Activated naive CD4-positive, alpha-beta T cell treated with anti-CD3 and anti-CD28 coated beads for 36 hours (primary cell): ENCODE measurements at regions of chr13 and their contacts with region 1.

Region 1: DNA sequence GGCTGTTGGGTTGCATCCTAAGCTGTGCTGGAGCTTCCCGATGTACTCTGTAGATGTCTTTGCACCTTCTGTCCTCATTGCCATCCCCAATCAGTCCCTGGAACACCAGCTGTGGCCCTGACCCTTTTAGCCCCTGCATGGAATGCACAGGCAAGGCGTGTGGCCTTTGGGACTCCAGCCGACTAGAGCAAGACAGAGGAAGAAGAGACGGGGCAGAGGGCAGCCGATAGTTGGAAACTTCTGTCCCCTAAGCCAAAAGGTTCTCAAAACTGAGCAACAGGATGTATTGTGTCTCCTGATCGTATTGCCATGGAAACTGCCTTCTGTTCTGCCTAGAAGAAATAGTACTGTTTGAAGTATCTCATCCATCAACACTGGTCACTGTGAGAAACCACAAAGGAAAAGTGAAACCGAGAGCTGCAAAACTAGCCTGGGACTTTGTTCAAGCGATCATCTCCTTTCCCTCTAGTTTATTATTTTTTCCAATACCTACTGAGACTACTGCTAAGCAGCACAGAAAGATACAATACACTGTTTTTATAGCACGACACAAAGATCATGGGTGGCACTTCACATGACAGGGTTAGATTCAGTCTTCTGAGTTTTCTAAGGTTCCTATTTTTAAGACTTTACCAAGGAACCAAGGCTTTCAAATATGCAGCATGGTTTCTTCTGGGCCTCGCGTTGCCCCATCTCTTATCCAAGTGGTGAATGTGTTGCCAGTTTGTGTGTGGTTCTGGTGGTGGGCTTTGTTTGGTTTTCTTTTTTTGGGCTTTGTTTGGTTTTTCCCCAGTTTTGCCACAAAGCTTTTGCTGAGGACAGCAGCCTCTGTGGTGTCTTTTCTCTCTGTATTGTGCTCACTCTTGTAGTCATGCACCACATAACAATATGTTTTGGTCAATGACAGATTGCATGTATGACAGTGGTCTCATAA is 49.2 kb upstream of the GPR183 start:
- DNase-seq: peak; percentile 70
- H3K4me3 Mint-ChIP-seq: peak overlapping the region; percentile 58
- H3K27ac Mint-ChIP-seq: peak overlapping the region; percentile 93
- H3K4me1 Mint-ChIP-seq: peaks cover 97% of the 10 kb centered on the region
- H3K27me3 Mint-ChIP-seq: no peaks in the 10 kb centered on the region

Region 2: DNA sequence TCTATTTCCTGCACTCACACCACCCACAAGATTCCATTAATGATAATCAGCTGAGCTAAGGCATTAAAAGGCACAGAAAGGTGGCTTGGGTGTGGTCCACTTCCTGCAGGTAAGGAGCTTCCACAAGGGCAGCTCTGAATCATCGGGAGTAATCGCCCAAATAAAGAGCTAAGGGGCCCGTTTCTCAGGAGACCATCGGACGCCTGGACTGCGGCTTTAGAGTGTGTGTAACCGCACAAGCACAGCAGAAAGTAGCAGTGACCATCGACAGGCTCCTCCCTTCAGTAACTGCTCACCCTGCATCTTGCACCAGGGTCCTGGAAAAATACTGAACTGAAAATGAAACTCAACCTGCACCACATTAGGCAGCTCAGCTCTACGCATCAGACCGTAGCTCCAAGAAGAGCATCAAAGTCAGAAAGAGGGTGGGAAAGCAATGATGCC is 785.5 kb before region 1 on chr13:
- CTCF ChIA-PET with region 1: no interaction called
- intact Hi-C with region 1: loop called (anchors 5 kb)
- DNase-seq: peak; percentile 62
- H3K4me3 Mint-ChIP-seq: peak overlapping the region; percentile 76
- H3K27ac Mint-ChIP-seq: peak overlapping the region; percentile 80
- H3K4me1 Mint-ChIP-seq: peaks cover 86% of the 10 kb centered on the region
- H3K27me3 Mint-ChIP-seq: no peaks in the 10 kb centered on the region

Region 3: GRCh38 chr13:99041788-99042187 is 314.6 kb before region 1 on chr13:
- CTCF ChIA-PET with region 1: no interaction called
- intact Hi-C with region 1: no loop called
- DNase-seq: no peak
- H3K4me3 Mint-ChIP-seq: no peak overlapping the region
- H3K27ac Mint-ChIP-seq: no peak overlapping the region
- H3K4me1 Mint-ChIP-seq: peaks cover 80% of the 10 kb centered on the region
- H3K27me3 Mint-ChIP-seq: no peaks in the 10 kb centered on the region

Region 4: GRCh38 chr13:99057310-99057975 is 299.0 kb before region 1 on chr13:
- CTCF ChIA-PET with region 1: no interaction called
- intact Hi-C with region 1: loop called (anchors 5 kb)
- DNase-seq: no peak
- H3K4me3 Mint-ChIP-seq: no peak overlapping the region
- H3K27ac Mint-ChIP-seq: no peak overlapping the region
- H3K4me1 Mint-ChIP-seq: peaks cover 68% of the 10 kb centered on the region
- H3K27me3 Mint-ChIP-seq: no peaks in the 10 kb centered on the region

Region 5: DNA sequence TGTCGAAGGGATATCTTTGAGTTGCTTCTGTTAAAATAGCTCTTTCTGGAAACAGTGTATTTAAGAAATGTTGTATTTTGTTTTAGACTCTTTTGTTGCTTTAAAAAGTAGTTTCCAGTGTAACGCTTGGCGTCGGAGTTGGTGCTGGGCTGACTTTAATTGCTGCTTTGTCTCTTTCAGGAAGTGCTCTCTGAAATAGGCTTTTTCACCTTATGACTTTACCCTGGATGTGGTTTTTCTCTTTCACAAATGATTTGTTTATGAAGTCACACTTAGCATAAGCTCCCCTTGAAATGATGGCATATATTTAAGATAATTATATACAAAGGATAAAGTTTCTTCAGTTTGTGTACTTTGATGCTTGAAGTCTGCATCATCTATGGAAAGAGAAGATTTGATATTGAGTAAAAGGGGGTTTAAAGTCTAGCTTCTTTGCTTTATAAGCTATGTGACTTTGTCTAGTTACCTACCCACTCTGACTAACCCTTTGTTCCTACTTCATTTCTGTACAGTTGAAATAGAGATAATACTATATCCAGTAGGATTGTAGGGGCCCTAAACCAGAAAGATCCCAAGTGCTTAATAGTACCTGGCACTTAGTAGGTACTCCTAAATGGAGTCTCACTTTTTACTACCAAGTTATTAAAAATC is 98.1 kb before region 1 on chr13 and contains the start of gene GPR18:
- CTCF ChIA-PET with region 1: no interaction called
- intact Hi-C with region 1: loop called (anchors 1 kb)
- DNase-seq: peak; percentile 61
- H3K4me3 Mint-ChIP-seq: peak within 1 kb of the TSS; percentile 81
- H3K27ac Mint-ChIP-seq: peak within 1 kb of the TSS; percentile 91
- H3K4me1 Mint-ChIP-seq: peaks cover 72% of the 10 kb centered on the region
- H3K27me3 Mint-ChIP-seq: no peaks in the 10 kb centered on the region
- total RNA-seq, gene GPR18: 2.4 TPM

Region 6: DNA sequence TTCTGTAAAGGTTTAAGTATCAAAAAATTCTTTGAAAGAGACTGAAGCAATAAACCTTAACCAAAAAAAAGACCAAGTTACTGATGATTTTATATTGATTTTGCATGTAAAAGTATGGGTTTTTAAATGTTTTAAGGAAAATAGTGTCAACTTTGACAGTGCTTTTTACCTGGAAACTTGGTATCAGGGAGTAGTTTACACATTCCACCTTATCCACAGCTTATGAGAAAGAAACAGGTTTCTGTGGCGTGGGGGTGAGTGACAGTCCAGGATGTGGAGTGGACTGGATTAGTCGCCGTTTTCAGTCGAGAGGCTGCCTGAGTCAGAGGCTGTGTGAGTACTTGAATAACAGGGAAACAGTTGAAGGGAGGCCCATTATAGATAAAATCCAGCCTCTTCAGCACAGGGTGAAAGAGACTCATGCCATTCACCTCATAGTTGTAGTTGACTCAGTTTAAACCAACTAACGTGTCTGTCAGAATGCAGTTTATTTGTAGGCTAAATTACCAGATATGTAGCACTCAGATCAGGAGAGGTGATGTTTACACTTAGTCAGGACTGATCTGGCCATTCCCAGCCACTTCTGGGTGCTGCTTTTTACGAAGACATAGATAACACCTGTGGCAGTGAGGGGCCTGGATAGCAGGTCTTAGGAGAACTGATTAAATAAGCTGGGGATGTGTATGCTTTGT is 48.6 kb before region 1 on chr13:
- CTCF ChIA-PET with region 1: interaction called, 3 read pairs
- intact Hi-C with region 1: loop called (anchors 1 kb)
- DNase-seq: peak; percentile 89
- H3K4me3 Mint-ChIP-seq: peak overlapping the region; percentile 93
- H3K27ac Mint-ChIP-seq: peak overlapping the region; percentile 99
- H3K4me1 Mint-ChIP-seq: peaks cover 73% of the 10 kb centered on the region
- H3K27me3 Mint-ChIP-seq: no peaks in the 10 kb centered on the region

Region 7: DNA sequence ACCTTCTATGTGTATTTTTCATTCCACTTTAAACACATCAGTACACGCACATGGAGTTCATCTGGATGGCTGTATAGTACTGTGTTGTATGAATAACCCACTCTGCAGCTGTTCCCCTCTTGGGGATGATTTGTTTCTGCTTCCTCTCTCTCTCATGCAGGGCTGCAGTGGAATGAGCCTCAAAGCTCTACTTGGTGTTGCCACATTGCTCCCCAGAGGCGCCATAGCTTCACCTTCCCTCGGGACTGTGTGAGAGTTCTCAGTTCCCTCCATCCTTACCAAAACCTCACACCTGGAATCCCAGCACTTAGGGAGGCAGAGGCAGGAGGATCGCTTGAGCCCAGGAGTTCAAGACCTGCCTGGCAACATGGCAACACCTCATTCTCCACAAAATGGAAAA is 20.8 kb before region 1 on chr13:
- CTCF ChIA-PET with region 1: interaction called, 10 read pairs
- intact Hi-C with region 1: loop called (anchors 1 kb)
- DNase-seq: no peak
- H3K4me3 Mint-ChIP-seq: no peak overlapping the region
- H3K27ac Mint-ChIP-seq: peak overlapping the region; percentile 20
- H3K4me1 Mint-ChIP-seq: peaks cover 77% of the 10 kb centered on the region
- H3K27me3 Mint-ChIP-seq: no peaks in the 10 kb centered on the region

Region 8: DNA sequence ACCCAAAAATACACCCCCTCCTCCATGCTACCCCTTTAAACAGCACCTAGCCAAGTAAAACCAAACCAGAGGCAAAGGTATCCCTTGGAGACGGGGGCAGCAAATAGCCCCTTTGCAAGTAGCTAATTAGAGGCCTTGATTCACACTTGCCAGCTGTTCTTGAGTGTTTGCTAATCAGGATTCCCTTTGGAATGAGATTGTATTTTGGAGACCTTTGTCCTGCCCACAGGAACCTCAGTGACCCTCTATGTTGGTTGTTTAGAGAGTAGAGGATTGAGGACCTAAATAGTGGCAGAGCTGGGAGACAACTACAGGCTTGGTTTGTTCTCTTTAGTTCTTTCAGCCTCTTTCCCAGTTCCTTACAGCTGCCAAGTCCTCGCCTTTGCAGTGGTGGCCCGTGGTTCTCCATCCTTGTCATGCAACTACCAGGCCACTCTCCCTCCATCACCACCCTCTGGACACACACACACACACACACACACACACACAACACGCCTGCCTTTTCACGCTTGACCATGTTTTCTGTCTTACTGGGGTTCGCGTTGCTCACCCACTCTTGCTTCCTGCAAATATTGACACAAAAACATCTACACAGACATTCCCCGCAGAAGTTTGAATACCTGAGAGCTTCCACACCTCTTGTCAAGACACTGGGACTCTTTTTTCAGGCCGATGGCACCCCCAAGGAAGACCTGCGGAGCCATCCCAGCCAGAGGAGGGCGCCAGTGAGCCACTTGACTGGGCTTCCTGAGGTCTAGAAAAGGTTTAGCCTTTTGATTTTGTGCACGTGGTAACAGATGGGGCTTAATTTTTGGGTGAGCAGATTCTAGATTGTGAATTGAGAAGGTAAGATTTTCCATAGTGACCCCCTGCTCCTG is 30.7 kb after region 1 on chr13:
- CTCF ChIA-PET with region 1: interaction called, 16 read pairs
- intact Hi-C with region 1: no loop called
- DNase-seq: peak; percentile 96
- H3K4me3 Mint-ChIP-seq: no peak overlapping the region
- H3K27ac Mint-ChIP-seq: peak overlapping the region; percentile 85
- H3K4me1 Mint-ChIP-seq: peaks cover 72% of the 10 kb centered on the region
- H3K27me3 Mint-ChIP-seq: no peaks in the 10 kb centered on the region